Calu3 (cell line): ENCODE measurements at regions of chrX and their contacts with region 1.

Region 1: GRCh38 chrX:116436358-116436816 is at the start of gene SLC6A14:
- DNase-seq: peak; percentile 83
- H3K4me3 Mint-ChIP-seq: peak within 1 kb of the TSS; percentile 81
- H3K27ac Mint-ChIP-seq: peak within 1 kb of the TSS; percentile 92
- H3K4me1 Mint-ChIP-seq: peaks cover 19% of the 10 kb centered on the region
- H3K27me3 Mint-ChIP-seq: no peaks in the 10 kb centered on the region
- CTCF ChIP-seq: no peak
- total RNA-seq, gene SLC6A14: 77.7 and 83.7 TPM in 2 replicates

Region 2: DNA sequence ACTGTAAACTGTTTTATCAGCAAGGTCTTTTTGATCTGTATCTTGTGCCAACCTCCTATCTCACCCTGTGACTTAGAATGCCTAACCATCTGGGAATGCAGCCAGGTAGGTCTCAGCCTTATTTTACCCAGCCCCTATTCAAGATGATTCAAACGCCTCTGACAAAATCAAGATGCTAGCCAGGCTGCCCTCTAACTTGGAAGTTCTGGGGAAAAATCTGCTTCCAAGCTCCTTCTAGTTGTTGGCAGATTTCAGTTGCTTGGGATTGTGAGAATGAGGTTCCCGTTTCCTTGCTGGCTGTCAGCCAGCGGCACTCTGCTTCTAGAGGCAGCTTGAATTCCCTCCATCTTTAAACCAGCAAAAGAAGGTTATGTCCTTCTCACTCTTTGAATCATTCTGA is 1112.2 kb before region 1 on chrX:
- CTCF ChIA-PET with region 1: no interaction called
- intact Hi-C with region 1: loop called (anchors 10 kb)
- DNase-seq: peak; percentile 0
- H3K4me3 Mint-ChIP-seq: no peak overlapping the region
- H3K27ac Mint-ChIP-seq: no peak overlapping the region
- H3K4me1 Mint-ChIP-seq: no peaks in the 10 kb centered on the region
- H3K27me3 Mint-ChIP-seq: no peaks in the 10 kb centered on the region
- CTCF ChIP-seq: no peak

Region 3: DNA sequence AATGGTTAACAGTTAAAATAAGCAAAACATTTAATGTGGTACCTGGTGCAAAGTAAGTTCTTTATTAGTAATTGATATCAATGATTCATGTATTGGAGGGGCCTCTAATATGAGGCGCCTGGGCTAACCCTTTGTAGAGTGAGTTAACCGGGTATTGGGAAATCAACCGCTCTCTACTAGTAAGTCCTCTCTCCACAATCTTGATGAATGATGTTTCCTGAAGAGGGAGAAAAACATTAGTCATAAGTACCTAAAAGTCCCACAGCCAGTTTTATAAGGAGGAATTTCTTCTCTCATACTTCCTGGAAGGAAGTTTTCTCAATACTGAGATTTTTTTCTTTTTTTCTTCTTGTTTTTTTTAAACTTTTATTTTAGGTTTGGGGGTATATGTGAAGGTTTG is 203.6 kb before region 1 on chrX:
- CTCF ChIA-PET with region 1: no interaction called
- intact Hi-C with region 1: loop called (anchors 5 kb)
- DNase-seq: no peak
- H3K4me3 Mint-ChIP-seq: no peak overlapping the region
- H3K27ac Mint-ChIP-seq: peak overlapping the region; percentile 77
- H3K4me1 Mint-ChIP-seq: peaks cover 36% of the 10 kb centered on the region
- H3K27me3 Mint-ChIP-seq: no peaks in the 10 kb centered on the region
- CTCF ChIP-seq: no peak

Region 4: DNA sequence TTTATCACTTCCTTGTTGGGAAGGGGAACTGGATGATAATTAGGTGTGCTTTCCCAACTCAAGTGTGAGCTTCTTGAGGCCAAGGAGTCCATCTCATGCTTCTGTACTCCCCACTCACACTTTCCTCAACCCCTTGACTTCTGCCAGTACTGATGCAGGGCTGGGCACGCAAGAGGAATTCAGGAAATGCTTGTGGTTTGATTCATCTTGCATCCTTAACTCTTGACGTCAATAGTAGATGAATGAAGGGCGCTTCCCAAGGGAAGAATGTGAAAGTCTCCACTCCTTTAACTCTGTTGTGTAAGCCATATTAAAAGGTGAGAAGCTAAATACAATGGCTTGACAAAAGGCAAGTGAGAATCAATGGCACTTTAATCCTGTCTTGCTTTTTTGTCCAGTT is 164.1 kb before region 1 on chrX:
- CTCF ChIA-PET with region 1: no interaction called
- intact Hi-C with region 1: loop called (anchors 5 kb)
- DNase-seq: peak; percentile 65
- H3K4me3 Mint-ChIP-seq: peak overlapping the region; percentile 17
- H3K27ac Mint-ChIP-seq: peak overlapping the region; percentile 98
- H3K4me1 Mint-ChIP-seq: peaks cover 23% of the 10 kb centered on the region
- H3K27me3 Mint-ChIP-seq: no peaks in the 10 kb centered on the region
- CTCF ChIP-seq: no peak

Region 5: GRCh38 chrX:116284386-116284785 is 152.0 kb before region 1 on chrX:
- CTCF ChIA-PET with region 1: no interaction called
- intact Hi-C with region 1: no loop called
- DNase-seq: no peak
- H3K4me3 Mint-ChIP-seq: no peak overlapping the region
- H3K27ac Mint-ChIP-seq: peak overlapping the region; percentile 75
- H3K4me1 Mint-ChIP-seq: peaks cover 38% of the 10 kb centered on the region
- H3K27me3 Mint-ChIP-seq: no peaks in the 10 kb centered on the region
- CTCF ChIP-seq: no peak

Region 6: DNA sequence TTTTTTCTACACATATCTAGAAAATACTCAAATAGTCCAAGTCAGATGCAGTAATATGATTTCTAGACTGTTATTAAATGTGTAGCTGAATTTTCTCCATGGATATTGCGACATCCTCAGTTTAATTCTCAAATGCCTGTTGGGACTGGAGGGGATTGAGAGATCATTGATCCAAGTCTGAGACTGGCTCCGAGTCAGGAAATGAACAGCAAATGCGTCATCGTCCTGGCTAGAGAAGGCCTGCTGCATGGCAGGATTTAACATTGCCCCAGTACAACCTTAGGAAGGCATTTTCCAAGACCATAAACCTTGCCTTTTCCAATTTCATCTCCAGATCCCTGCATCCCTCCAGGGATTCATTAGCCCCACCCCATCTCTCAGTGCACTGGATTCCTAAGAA is 56.5 kb before region 1 on chrX:
- CTCF ChIA-PET with region 1: no interaction called
- intact Hi-C with region 1: loop called (anchors 5 kb)
- DNase-seq: peak; percentile 50
- H3K4me3 Mint-ChIP-seq: no peak overlapping the region
- H3K27ac Mint-ChIP-seq: no peak overlapping the region
- H3K4me1 Mint-ChIP-seq: peaks cover 35% of the 10 kb centered on the region
- H3K27me3 Mint-ChIP-seq: no peaks in the 10 kb centered on the region
- CTCF ChIP-seq: no peak